Kidney (tissue), 22 donors: ENCODE measurements at regions of chr10 and their contacts with region 1.

Region 1: DNA sequence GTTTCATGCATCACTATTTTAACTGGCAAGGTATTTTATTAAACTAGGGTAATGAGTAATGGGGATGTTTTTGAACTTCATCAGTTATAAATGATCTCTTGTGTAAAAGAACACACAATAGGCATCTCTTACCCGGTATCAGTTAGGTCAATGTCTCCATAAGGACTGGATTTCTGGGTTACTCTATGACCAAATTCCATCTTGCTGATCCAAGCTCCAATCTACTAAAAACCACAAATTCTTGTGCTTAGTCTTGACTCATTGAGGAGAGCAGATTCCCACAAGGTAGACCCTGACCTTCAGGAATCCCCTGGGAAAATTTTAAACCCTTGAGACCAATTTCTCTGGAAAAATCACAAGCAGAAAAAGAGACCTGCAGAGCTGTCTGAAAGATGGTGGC is 1167.6 kb downstream of the XPNPEP1 start:
- DNase-seq: no peak
- H3K4me3 ChIP-seq: no peak overlapping the region
- H3K27ac ChIP-seq: no peak overlapping the region
- H3K4me1 ChIP-seq: no peaks in the 10 kb centered on the region
- H3K27me3 ChIP-seq: no peaks in the 10 kb centered on the region
- CTCF ChIP-seq: no peak

Region 2: DNA sequence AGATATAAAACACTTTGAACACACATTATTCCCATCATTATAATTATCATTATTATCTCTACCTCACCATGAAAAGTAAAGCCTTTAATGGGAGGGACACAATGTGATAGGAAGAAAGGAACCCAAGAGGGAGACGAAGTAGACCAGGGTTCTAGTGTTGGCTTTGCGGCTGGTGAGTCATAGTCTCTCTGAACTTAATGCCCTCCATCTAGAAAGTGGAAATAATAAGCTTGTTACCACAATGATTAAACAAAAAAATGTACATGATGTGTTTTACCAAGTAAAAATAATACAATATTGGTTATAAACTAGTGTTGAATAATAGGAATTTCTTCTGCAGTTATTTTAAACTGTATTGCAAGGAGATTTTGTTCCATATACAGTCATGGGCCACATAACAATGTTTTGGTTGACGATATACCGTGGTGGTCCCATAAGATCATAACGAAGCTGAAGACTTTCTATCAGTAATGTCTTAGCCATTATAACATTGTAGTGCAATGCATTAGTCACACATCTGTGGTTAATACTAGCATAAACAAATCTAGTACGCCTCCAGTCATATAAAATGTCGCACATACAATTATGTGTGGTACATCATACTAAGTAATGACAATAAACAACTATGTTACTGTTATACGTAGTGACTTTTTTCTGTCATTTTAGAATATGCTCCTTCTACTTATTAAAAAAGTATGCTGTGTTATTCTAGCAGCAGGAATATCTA is 1140.6 kb before region 1 on chr10:
- intact Hi-C with region 1: loop called (anchors 5 kb)
- DNase-seq: no peak
- H3K4me3 ChIP-seq: no peak overlapping the region
- H3K27ac ChIP-seq: no peak overlapping the region
- H3K4me1 ChIP-seq: no peaks in the 10 kb centered on the region
- H3K27me3 ChIP-seq: no peaks in the 10 kb centered on the region
- CTCF ChIP-seq: no peak